Gastrocnemius medialis (tissue), 4 donors: ENCODE measurements at regions of chr6 and their contacts with region 1.

Region 1: GRCh38 chr6:32971581-32972352 is 3.4 kb downstream of the BRD2 start:
- DNase-seq: peak; percentile 100
- ATAC-seq: peak; percentile 59 to 67
- H3K4me3 ChIP-seq: peak overlapping the region; percentile 95 to 97 (median 96)
- H3K27ac ChIP-seq: peak overlapping the region; percentile 97 to 100 (median 100)
- H3K4me1 ChIP-seq: peaks cover 34% of the 10 kb centered on the region in 2 donors
- H3K27me3 ChIP-seq: no peaks in the 10 kb centered on the region
- CTCF ChIP-seq: peak in 1 of 5 experiments; percentile 17
- POLR2A ChIP-seq: peak; percentile 99

Region 2: GRCh38 chr6:31665501-31666336 is 1306.0 kb before region 1 on chr6 and contains the start of gene CSNK2B:
- in situ Hi-C with region 1: no loop called
- intact Hi-C with region 1: loop called (anchors 5 kb)
- DNase-seq: peak; percentile 99
- ATAC-seq: peak; percentile 86
- H3K4me3 ChIP-seq: peak within 1 kb of the TSS; percentile 83 to 98 (median 94)
- H3K27ac ChIP-seq: peak within 1 kb of the TSS; percentile 93 to 100 (median 97)
- H3K4me1 ChIP-seq: peaks cover 25 to 36% of the 10 kb centered on the region in 2 donors
- H3K27me3 ChIP-seq: no peaks in the 10 kb centered on the region
- CTCF ChIP-seq: peak in 1 of 5 experiments; percentile 19
- POLR2A ChIP-seq: peak; percentile 72
- total RNA-seq, gene CSNK2B: 185 to 251 (median 226) TPM

Region 3: DNA sequence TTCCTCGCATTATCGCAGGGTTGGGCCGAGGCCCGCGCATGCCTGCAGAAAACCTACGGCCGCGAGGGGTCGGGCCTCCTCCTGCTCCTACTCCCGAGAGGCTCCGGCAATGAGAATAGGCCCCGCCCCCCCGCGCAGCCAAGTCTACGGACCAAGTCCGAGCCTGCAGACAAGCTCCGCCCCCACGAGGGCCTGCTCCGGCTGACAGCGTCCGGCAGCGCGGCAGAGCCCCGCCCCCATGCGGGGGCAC is 776.2 kb before region 1 on chr6:
- in situ Hi-C with region 1: loop called in 3 of 4 experiments (anchors 25 kb)
- intact Hi-C with region 1: loop called (anchors 5 kb)
- DNase-seq: peak; percentile 100
- ATAC-seq: peak in 1 of 2 donors; percentile 83
- H3K4me3 ChIP-seq: peak overlapping the region in 3 of 4 donors; percentile 67 to 86 (median 74)
- H3K27ac ChIP-seq: peak overlapping the region; percentile 91 to 98 (median 96)
- H3K4me1 ChIP-seq: peaks cover 28 to 32% of the 10 kb centered on the region in 2 donors
- H3K27me3 ChIP-seq: no peaks in the 10 kb centered on the region
- CTCF ChIP-seq: peak in 4 of 5 experiments; percentile 54 to 70 (median 56)
- POLR2A ChIP-seq: no peak

Region 4: DNA sequence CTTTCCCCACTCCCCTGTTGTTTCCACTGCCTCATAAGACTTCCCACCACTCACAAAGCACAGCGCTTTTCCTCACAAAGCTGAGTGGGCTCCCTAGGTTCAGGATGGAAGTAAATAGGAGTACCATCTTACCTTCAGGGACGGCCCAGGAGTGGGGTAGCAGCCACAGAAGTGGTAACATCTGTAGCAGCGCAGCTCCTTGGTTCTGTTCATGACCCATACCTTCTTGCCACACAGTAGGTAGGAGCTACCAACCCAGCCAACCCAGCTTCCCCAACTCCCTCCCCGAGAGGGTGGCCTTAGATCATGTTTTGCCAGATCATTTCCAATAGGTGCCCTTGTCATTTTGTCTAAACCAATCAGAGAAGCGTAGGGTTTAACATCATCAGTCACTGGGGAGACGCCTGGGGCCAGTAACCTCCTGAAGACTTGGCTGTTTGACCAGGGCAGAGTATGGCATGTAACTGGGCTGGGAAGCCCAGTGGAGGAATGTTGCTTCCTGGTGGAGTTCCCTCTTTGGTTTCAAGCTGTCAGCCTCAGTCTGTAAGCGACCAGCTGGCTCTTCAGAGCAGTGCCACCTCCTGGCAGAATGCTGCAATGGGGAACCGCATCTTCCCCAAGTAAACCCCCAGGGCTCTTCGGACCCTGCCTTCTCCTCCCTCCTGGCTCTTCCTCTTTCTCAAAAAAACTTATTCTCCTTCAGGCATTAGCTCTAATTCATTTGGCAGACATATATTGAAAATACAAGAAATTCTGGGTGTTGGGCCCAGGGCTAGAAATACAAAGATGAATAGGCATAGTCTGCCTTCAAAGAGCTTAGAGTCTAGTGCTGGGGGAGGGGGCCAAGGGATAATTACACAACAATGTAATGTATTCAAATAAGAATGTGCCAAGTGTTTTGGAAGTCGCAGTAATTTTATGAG is 18.7 kb before region 1 on chr6 and contains the start of gene HLA-DMA:
- in situ Hi-C with region 1: no loop called
- intact Hi-C with region 1: loop called (anchors 1 kb)
- DNase-seq: peak; percentile 81 to 94
- ATAC-seq: peak; percentile 99 to 100
- H3K4me3 ChIP-seq: peak within 1 kb of the TSS; percentile 3 to 44 (median 22)
- H3K27ac ChIP-seq: peak within 1 kb of the TSS; percentile 68 to 85 (median 75)
- H3K4me1 ChIP-seq: peaks cover 6 to 8% of the 10 kb centered on the region in 2 donors
- H3K27me3 ChIP-seq: no peaks in the 10 kb centered on the region
- CTCF ChIP-seq: peak; percentile 81 to 87 (median 84)
- POLR2A ChIP-seq: peak; percentile 48 to 72
- total RNA-seq, gene HLA-DMA: 3.6 to 22.8 (median 6.3) TPM

Region 5: DNA sequence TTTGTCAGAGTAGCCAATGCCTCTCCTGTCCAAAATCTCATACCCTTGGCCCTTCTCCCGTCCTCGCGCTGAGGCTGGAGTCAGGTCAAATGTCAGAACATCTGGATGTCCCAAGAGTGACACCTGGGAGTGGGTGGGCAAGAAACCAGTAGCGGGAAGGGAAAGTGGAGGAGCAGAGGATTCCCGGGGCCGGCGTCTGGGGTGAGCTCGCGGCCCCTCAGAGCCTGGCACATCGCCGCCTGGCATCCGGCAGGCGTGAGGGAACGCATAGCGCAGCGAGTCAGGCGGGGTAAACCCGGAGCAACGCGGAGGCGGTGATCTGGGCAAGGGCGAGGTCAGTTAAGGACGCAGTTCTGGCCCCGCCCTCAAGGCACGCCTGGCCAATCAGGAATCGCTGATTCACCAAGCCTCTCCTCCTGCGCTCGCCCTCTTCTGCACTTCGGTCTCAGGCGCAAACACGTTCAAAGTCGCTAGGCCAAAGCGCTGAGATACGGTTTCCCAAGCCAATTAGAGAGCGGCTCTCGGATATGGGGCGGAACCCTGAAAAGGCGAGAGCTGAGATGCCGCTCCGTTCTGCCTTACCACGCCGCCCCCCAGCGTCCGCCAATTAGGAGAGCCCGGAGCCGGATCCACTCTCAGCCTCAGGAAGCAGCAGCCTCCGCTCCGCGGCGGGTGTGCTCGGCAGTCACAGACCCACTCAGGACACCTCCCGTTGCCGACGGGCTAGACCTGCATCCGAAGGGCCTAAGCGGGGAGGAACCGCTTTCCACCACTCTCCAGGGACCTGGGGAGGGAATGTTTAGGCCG is 277.4 kb after region 1 on chr6:
- in situ Hi-C with region 1: no loop called
- intact Hi-C with region 1: loop called (anchors 5 kb)
- DNase-seq: peak; percentile 96 to 98
- ATAC-seq: peak; percentile 96 to 98
- H3K4me3 ChIP-seq: peak overlapping the region; percentile 54 to 83 (median 65)
- H3K27ac ChIP-seq: peak overlapping the region; percentile 84 to 96 (median 88)
- H3K4me1 ChIP-seq: peaks cover 10 to 17% of the 10 kb centered on the region in 2 donors
- H3K27me3 ChIP-seq: no peaks in the 10 kb centered on the region
- CTCF ChIP-seq: peak in 2 of 5 experiments; percentile 16 to 30
- POLR2A ChIP-seq: peak; percentile 51 to 63

Region 6: DNA sequence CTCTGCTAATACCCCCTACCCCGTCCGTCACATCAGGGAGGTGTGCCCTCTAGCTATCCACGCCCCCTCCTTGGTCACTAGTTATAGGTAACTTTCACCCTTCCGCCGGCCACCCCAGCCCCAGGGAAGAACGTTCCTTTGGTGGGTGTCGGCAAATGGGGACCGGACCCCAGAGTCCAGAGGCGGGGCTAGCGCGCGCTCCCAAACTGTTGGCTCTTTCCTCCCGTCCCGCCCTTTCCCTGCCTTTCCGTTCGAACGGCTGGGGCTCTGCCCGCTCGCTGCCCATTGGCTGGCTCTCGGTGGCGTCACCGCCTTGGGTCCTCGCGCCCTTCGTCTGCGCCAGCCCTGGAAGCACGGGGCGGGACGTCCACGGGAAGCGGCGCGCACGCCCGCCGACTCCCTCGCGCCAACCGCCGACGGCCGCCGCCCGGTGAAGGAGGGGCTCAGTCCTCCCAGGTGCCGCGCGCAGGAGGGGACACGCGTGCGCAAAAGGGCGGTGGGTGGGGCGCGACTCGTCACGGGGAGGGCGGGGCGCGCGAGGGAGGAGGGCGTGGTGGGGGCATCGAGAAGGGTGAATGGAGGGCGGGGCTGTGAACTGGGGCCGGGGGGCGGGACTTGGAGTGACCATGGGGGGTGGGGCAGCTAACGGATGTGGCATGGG is 438.4 kb after region 1 on chr6:
- in situ Hi-C with region 1: loop called in 1 of 4 experiments (anchors 25 kb)
- intact Hi-C with region 1: loop called (anchors 1 kb)
- DNase-seq: peak; percentile 96 to 97
- ATAC-seq: peak; percentile 87 to 88
- H3K4me3 ChIP-seq: peak overlapping the region; percentile 70 to 100 (median 98)
- H3K27ac ChIP-seq: peak overlapping the region; percentile 99 to 100 (median 99)
- H3K4me1 ChIP-seq: peaks cover 9 to 18% of the 10 kb centered on the region in 2 donors
- H3K27me3 ChIP-seq: no peaks in the 10 kb centered on the region
- CTCF ChIP-seq: no peak
- POLR2A ChIP-seq: peak; percentile 54 to 73